ENCODE measurements at regions of chr21 and their contacts with region 1.

Region 1: GRCh38 chr21:33360881-33361602 is 36.3 kb downstream of the IFNAR1 start:
- DNase-seq: peak; percentile 87
- H3K4me3 Mint-ChIP-seq: peak overlapping the region; percentile 70
- H3K27ac Mint-ChIP-seq: peak overlapping the region; percentile 67
- H3K4me1 Mint-ChIP-seq: peaks cover 25% of the 10 kb centered on the region
- H3K27me3 Mint-ChIP-seq: peaks cover 1% of the 10 kb centered on the region

Region 2: DNA sequence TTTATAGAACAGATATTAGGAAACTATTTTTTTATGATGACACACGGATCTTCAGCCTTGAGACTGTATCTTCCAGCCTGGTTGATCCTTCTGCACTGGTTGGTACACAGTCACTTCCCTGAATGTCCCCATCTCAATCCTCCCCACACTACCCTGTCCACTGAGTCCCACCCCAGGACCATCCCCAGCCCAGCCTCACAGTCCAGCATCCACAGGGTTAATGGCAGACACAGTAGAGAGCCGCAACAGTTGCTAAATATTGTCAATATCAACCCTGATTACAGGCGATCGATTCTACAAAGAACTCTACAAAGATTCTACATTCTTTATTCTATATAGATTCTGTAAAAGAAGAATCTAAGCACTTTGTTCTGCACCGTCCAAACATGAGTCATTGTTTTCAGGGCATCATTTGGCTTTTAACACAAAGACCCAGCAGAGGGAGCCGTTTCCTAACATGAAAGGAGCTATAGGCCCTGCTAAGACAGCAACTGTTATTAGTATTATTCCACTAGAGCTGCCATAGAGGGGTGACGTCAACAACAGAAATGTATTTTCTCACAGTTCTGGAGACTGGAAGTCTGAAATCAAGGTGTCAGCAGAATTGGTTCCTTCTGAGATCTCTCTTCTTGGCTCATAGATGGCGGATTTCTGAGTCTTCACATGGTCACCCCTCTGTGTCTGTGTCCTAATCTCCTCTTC is 161.4 kb before region 1 on chr21:
- CTCF ChIA-PET with region 1: interaction called, 29 read pairs
- POLR2A ChIA-PET with region 1: interaction called, 12 read pairs
- DNase-seq: peak; percentile 83
- H3K4me3 Mint-ChIP-seq: no peak overlapping the region
- H3K27ac Mint-ChIP-seq: no peak overlapping the region
- H3K4me1 Mint-ChIP-seq: peaks cover 25% of the 10 kb centered on the region
- H3K27me3 Mint-ChIP-seq: peaks cover 10% of the 10 kb centered on the region

Region 3: GRCh38 chr21:33324291-33325221 is 36.5 kb before region 1 on chr21 and contains the start of gene IFNAR1:
- CTCF ChIA-PET with region 1: interaction called, 55 read pairs
- POLR2A ChIA-PET with region 1: interaction called, 46 read pairs
- DNase-seq: peak; percentile 98
- H3K4me3 Mint-ChIP-seq: no peak within 1 kb of the TSS
- H3K27ac Mint-ChIP-seq: no peak within 1 kb of the TSS
- H3K4me1 Mint-ChIP-seq: peaks cover 21% of the 10 kb centered on the region
- H3K27me3 Mint-ChIP-seq: no peaks in the 10 kb centered on the region
- total RNA-seq, gene IFNAR1: 38.6 to 39.3 TPM

Region 4: GRCh38 chr21:33339918-33340317 is 21.1 kb before region 1 on chr21:
- CTCF ChIA-PET with region 1: interaction called, 87 read pairs
- POLR2A ChIA-PET with region 1: interaction called, 7 read pairs
- DNase-seq: no peak
- H3K4me3 Mint-ChIP-seq: no peak overlapping the region
- H3K27ac Mint-ChIP-seq: no peak overlapping the region
- H3K4me1 Mint-ChIP-seq: no peaks in the 10 kb centered on the region
- H3K27me3 Mint-ChIP-seq: no peaks in the 10 kb centered on the region

Region 5: GRCh38 chr21:33374450-33375096 is 13.5 kb after region 1 on chr21:
- CTCF ChIA-PET with region 1: interaction called, 30 read pairs
- POLR2A ChIA-PET with region 1: interaction called, 6 read pairs
- DNase-seq: peak; percentile 67
- H3K4me3 Mint-ChIP-seq: no peak overlapping the region
- H3K27ac Mint-ChIP-seq: no peak overlapping the region
- H3K4me1 Mint-ChIP-seq: peaks cover 12% of the 10 kb centered on the region
- H3K27me3 Mint-ChIP-seq: peaks cover 48% of the 10 kb centered on the region

Region 6: GRCh38 chr21:33386222-33386784 is 25.3 kb after region 1 on chr21:
- CTCF ChIA-PET with region 1: interaction called, 24 read pairs
- POLR2A ChIA-PET with region 1: interaction called, 15 read pairs
- DNase-seq: no peak
- H3K4me3 Mint-ChIP-seq: no peak overlapping the region
- H3K27ac Mint-ChIP-seq: no peak overlapping the region
- H3K4me1 Mint-ChIP-seq: peaks cover 41% of the 10 kb centered on the region
- H3K27me3 Mint-ChIP-seq: peaks cover 75% of the 10 kb centered on the region

Region 7: DNA sequence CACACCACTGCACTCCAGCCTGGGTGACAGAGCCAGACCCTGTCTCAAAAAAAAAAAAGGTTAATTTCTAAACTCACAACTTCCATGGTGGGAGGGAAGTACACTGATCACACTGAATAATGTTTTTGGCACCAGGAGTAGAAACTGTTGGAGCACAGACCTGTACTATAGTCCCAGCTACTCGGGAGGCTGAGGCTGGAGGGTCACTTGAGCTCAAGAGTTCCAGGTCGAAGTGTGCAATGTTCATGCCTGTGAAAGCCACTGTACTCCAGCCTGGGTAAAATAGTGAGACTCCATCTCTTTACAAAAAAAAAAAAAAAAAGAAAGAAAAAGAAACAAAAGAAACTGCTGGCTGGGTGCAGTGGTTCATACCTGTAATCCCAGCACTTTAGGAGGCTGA is 83.5 kb after region 1 on chr21:
- CTCF ChIA-PET with region 1: interaction called, 32 read pairs
- POLR2A ChIA-PET with region 1: interaction called, 18 read pairs
- DNase-seq: no peak
- H3K4me3 Mint-ChIP-seq: no peak overlapping the region
- H3K27ac Mint-ChIP-seq: no peak overlapping the region
- H3K4me1 Mint-ChIP-seq: peaks cover 4% of the 10 kb centered on the region
- H3K27me3 Mint-ChIP-seq: no peaks in the 10 kb centered on the region